Right ventricle myocardium superior (tissue), 1 donor: ENCODE measurements at regions of chr5 and their contacts with region 1.

Region 1: DNA sequence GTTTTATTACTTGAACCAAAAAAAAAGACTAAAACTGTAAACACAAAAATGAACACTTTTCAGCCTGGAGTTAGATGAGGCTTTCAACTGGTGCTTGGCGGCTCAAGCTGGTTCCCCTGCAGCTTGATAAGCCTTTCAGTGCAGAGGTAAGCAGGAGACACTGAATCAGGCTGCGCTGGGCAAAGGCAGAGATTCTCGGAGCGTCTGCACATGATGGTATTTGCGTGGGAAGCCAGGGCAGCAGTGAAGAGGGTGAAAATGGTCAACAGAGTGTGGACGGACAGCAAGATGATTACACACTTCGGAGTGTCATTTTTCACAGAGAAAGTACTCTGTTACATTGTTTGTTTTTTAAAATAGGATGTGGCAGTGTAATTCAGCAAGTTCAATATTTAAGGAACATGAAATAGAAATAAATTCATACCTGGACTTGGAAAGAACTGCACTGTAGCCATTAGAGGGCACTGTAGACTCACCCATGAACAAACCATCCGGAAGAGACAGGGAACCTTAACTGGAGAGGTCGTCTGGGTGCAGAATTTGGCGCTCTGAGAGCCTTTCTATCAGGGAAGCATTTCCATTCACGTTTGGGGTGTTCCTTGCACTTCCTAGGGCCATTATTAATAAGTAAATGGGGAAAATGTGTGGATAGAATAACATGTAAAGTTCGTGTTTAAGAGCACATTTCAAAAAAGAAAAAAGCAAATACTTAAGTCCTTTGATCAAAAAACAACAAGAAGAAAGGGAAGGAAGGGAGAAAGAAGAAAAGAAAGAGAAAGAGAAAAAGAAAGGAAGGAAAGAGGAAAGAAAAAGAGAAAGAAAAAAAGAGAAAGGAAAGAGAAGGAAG is 69.8 kb downstream of the ICE1 start:
- DNase-seq: no peak
- ATAC-seq: peak; percentile 41

Region 2: DNA sequence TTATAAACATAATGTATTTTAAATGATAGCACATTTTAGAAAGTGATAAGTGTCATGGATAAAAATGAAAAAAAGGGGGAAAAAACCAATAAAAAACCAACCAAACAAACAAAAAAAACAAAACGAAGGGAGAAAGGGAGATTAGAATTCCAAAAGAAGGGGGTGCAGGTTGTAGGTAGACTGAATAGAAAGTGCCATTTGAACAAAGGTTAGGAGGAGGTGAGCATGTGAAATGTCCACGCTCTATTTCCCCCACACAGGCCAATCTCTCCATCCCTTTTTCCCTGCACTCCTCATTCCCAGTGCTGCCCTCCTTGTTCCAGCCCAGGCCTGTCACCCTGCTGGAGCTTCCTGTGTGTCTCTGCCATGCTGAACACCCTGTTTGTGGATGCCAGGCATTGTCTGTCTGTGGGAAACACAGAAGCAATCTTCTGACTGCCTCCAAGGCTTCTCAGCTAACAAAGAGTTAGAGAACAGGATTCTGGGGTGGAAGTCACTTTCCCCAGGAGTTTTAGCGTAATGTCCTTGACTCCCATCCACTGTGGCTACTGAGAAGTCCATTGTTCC is 213.4 kb before region 1 on chr5:
- intact Hi-C with region 1: no loop called
- DNase-seq: no peak
- ATAC-seq: no peak

Region 3: GRCh38 chr5:5588887-5589826 is 96.8 kb after region 1 on chr5:
- intact Hi-C with region 1: no loop called
- DNase-seq: no peak
- ATAC-seq: no peak

Region 4: GRCh38 chr5:5613261-5613990 is 121.1 kb after region 1 on chr5:
- intact Hi-C with region 1: no loop called
- DNase-seq: no peak
- ATAC-seq: no peak

Region 5: GRCh38 chr5:5881294-5881693 is 389.0 kb after region 1 on chr5:
- intact Hi-C with region 1: loop called (anchors 5 kb)
- DNase-seq: peak; percentile 42
- ATAC-seq: peak; percentile 57

Region 6: GRCh38 chr5:6377905-6378765 is 885.8 kb after region 1 on chr5 and contains the start of gene MED10:
- intact Hi-C with region 1: loop called (anchors 10 kb)
- DNase-seq: peak; percentile 97
- ATAC-seq: peak; percentile 100
- total RNA-seq, gene MED10: 30.9 TPM